ENCODE measurements at regions of chr6 and their contacts with region 1.

Region 1: DNA sequence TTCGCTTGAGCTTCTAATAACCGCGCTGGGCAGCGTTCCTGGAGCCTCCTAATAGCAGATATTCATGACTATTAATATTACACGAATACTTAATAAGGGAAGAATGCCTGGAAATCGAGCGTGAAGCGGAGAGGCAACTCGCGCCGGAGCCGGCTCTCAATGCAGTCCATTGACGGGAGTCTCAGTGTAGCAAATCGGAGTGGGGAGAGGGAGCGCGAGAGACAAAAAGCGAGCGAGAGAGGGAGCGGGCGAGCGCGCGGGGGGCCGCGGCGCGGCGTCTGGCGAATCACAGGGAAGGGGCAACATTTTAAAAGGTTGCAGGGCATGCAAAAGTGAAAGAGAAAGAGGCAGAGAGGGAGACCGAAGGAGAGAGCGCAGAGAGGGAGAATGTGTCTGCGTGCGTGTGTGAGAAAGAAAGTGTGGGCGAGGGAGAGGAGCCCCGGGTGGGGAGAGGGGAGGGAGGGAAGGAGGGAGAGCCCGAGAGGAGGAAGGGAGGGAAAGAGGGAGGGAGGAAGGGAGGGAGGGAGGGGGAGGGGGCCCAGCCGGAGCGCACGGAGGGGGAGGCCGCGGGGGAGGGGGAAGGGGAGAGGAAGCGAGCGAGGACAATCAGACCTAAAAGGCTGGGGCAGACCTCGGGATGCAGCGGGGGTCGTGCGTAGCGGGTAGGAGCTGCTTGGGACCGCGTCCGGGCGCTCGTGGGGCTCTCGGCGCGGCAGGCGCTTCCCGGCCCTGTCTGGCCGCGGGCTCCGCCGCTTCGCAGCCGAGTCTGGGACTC is 2.7 kb downstream of the TFAP2A start:
- DNase-seq: peak; percentile 47
- H3K4me3 Mint-ChIP-seq: peak overlapping the region; percentile 88
- H3K27ac Mint-ChIP-seq: peak overlapping the region; percentile 81
- H3K4me1 Mint-ChIP-seq: peaks cover 28% of the 10 kb centered on the region
- H3K27me3 Mint-ChIP-seq: peaks cover 88% of the 10 kb centered on the region

Region 2: GRCh38 chr6:10381133-10381829 is 30.9 kb before region 1 on chr6:
- intact Hi-C with region 1: loop called (anchors 1 kb)
- DNase-seq: no peak
- H3K4me3 Mint-ChIP-seq: no peak overlapping the region
- H3K27ac Mint-ChIP-seq: no peak overlapping the region
- H3K4me1 Mint-ChIP-seq: peaks cover 4% of the 10 kb centered on the region
- H3K27me3 Mint-ChIP-seq: peaks cover 53% of the 10 kb centered on the region

Region 3: GRCh38 chr6:10395171-10395941 is 16.8 kb before region 1 on chr6:
- intact Hi-C with region 1: loop called (anchors 2 kb)
- DNase-seq: no peak
- H3K4me3 Mint-ChIP-seq: no peak overlapping the region
- H3K27ac Mint-ChIP-seq: no peak overlapping the region
- H3K4me1 Mint-ChIP-seq: no peaks in the 10 kb centered on the region
- H3K27me3 Mint-ChIP-seq: peaks cover 88% of the 10 kb centered on the region

Measured in activated T-helper 2 cell treated with anti-CD3 and anti-CD28 coated beads, Interferon-gamma antibody, Interleukin-2, Interleukin-4, amounts not matched to agents 10 μg/mL and 5 μg/mL and 100 μg/mL, durations not matched to agents 14 hours and 24 hours and 36 hours (primary cell).